PC-3 (cell line): ENCODE measurements at regions of chr19 and their contacts with region 1.

Region 1: DNA sequence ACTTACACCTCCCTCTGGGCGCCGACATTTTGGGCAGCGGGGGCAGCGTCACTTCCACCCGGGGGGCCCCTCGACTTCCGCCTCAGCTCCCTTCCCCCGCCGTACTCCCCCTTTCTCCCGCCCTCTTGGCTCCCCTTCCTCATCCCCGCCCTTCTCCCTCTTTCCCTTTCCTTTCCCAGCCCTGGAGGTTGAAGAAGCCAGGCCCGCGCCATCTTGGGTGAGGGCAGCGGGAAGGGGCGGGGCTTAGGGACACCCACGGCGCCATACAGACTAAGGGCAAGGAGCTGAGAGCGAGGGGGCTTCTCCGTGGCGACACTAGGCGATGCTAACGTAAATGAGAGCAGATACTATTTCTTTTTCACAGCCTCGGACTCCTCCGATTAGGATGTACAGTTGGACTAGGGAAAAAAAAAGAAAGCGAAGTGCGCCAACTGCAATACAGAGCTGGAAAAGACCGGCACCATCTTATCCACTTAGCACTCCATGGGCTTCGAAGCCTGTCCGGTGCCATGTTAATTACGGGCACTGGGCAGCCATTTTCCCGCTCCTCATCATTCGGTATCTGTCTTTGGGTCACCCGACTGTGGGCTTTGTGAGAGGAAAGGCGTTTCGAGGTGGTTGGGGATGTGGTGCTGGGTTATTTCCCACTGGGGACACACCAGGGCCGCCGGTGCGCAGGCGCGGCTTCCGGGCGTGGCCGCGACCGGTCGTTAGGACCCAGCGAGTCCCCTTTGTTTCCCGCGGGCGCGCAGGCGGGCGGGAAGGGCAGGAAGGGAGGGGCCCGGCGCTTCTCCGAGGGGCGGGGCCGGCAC is at the start of gene FIZ1:
- DNase-seq: peak; percentile 99
- ATAC-seq: peak; percentile 81
- H3K4me3 ChIP-seq: peak within 1 kb of the TSS; percentile 77
- H3K27ac ChIP-seq: peak within 1 kb of the TSS; percentile 87
- H3K4me1 ChIP-seq: peaks cover 17% of the 10 kb centered on the region
- H3K27me3 ChIP-seq: no peaks in the 10 kb centered on the region
- CTCF ChIP-seq: no peak
- total RNA-seq, gene FIZ1: 11.6 and 11.7 TPM in 2 replicates

Region 2: GRCh38 chr19:54803410-54803809 is 796.3 kb before region 1 on chr19 and contains the start of gene KIR2DL4:
- CTCF ChIA-PET with region 1: no interaction called
- POLR2A ChIA-PET with region 1: no interaction called
- intact Hi-C with region 1: no loop called
- DNase-seq: no peak
- ATAC-seq: no peak
- H3K4me3 ChIP-seq: no peak within 1 kb of the TSS
- H3K27ac ChIP-seq: no peak within 1 kb of the TSS
- H3K4me1 ChIP-seq: no peaks in the 10 kb centered on the region
- H3K27me3 ChIP-seq: peaks cover 70% of the 10 kb centered on the region
- CTCF ChIP-seq: no peak
- total RNA-seq, gene KIR2DL4: not detected in 2 replicates

Region 3: GRCh38 chr19:55160128-55160985 is 439.3 kb before region 1 on chr19:
- CTCF ChIA-PET with region 1: no interaction called
- POLR2A ChIA-PET with region 1: interaction called, 10 read pairs
- intact Hi-C with region 1: no loop called
- DNase-seq: peak; percentile 99
- ATAC-seq: peak; percentile 81
- H3K4me3 ChIP-seq: no peak overlapping the region
- H3K27ac ChIP-seq: no peak overlapping the region
- H3K4me1 ChIP-seq: peaks cover 21% of the 10 kb centered on the region
- H3K27me3 ChIP-seq: no peaks in the 10 kb centered on the region
- CTCF ChIP-seq: peak; percentile 99

Region 4: GRCh38 chr19:55407800-55408532 is 191.7 kb before region 1 on chr19:
- CTCF ChIA-PET with region 1: no interaction called
- POLR2A ChIA-PET with region 1: no interaction called
- intact Hi-C with region 1: no loop called
- DNase-seq: peak; percentile 99
- ATAC-seq: peak; percentile 93
- H3K4me3 ChIP-seq: peak overlapping the region; percentile 79
- H3K27ac ChIP-seq: peak overlapping the region; percentile 93
- H3K4me1 ChIP-seq: peaks cover 20% of the 10 kb centered on the region
- H3K27me3 ChIP-seq: no peaks in the 10 kb centered on the region
- CTCF ChIP-seq: no peak

Region 5: GRCh38 chr19:55580628-55581144 is 19.0 kb before region 1 on chr19 and contains the start of gene ZNF579:
- CTCF ChIA-PET with region 1: interaction called, 4 read pairs
- POLR2A ChIA-PET with region 1: interaction called, 3 read pairs
- intact Hi-C with region 1: loop called (anchors 2 kb)
- DNase-seq: peak; percentile 92
- ATAC-seq: peak; percentile 78
- H3K4me3 ChIP-seq: peak within 1 kb of the TSS; percentile 93
- H3K27ac ChIP-seq: peak within 1 kb of the TSS; percentile 60
- H3K4me1 ChIP-seq: peaks cover 6% of the 10 kb centered on the region; the same call in 1 of the 2 replicates
- H3K27me3 ChIP-seq: no peaks in the 10 kb centered on the region
- CTCF ChIP-seq: no peak
- total RNA-seq, gene ZNF579: 13.5 and 26.1 TPM in 2 replicates

Region 6: DNA sequence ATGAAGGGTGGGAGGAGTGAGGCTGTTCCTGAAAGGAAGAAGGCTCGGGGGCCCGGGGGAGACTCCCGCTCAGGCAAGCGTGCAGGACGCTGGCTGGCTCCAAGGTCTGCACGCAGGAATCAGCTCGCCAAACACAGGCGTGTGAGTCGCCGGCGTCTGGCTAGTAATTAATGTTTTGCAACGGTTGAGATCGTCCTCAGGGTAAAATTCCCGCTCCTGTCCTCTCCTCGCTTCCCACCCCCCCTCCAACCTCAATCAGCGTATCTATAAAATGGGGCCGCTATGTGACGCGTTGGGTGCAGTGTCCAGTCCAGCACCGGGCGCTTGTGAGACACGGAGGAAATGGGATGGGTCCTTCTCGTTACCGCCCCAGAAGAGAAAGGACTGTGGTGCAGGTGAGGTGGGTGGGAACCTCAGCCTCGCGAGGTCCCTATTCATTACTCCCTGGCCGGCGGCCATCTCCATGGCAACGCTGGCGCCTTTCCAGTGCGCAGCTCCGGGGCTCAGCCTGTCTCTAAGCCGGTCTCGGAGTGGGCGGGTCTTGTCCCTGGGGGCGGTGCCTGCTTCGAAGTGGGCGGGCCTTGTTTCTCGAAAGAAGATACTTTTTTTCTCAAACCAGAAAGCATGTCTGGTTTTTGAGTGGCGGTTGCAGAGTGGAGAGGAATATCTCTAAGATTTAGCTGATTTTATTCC is 12.6 kb before region 1 on chr19:
- CTCF ChIA-PET with region 1: no interaction called
- POLR2A ChIA-PET with region 1: interaction called, 6 read pairs
- intact Hi-C with region 1: loop called (anchors 1 kb)
- DNase-seq: peak; percentile 99
- ATAC-seq: peak; percentile 91
- H3K4me3 ChIP-seq: peak overlapping the region; percentile 66
- H3K27ac ChIP-seq: no peak overlapping the region
- H3K4me1 ChIP-seq: peaks cover 10% of the 10 kb centered on the region
- H3K27me3 ChIP-seq: no peaks in the 10 kb centered on the region
- CTCF ChIP-seq: no peak

Region 7: DNA sequence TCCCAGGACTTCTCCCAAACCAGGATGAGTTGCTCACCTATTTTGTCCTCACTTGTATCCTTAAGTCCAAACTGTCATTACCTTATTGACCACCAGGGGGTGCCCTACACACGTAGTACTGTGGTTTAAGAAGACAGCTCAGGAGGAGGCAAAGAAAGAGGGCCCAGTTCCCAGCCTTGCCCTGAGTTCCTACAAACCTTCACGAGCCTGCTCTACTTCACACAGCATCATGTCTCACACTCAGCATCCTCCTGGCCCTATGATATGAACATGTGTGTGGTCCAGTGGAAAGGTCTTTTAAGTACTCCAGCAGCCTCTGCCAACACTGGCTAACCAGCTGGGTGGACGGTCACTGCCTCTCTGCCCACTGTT is 32.8 kb after region 1 on chr19:
- CTCF ChIA-PET with region 1: interaction called, 12 read pairs
- POLR2A ChIA-PET with region 1: interaction called, 7 read pairs
- intact Hi-C with region 1: loop called (anchors 5 kb)
- DNase-seq: peak; percentile 99
- ATAC-seq: peak; percentile 73
- H3K4me3 ChIP-seq: no peak overlapping the region
- H3K27ac ChIP-seq: no peak overlapping the region
- H3K4me1 ChIP-seq: peaks cover 13% of the 10 kb centered on the region
- H3K27me3 ChIP-seq: no peaks in the 10 kb centered on the region
- CTCF ChIP-seq: peak; percentile 96

Region 8: GRCh38 chr19:55640577-55641425 is 41.1 kb after region 1 on chr19 and contains the start of gene ZNF580:
- CTCF ChIA-PET with region 1: no interaction called
- POLR2A ChIA-PET with region 1: no interaction called
- intact Hi-C with region 1: loop called (anchors 2 kb)
- DNase-seq: peak; percentile 80
- ATAC-seq: peak; percentile 45
- H3K4me3 ChIP-seq: peak within 1 kb of the TSS; percentile 96
- H3K27ac ChIP-seq: peak within 1 kb of the TSS; percentile 62
- H3K4me1 ChIP-seq: peaks cover 42% of the 10 kb centered on the region
- H3K27me3 ChIP-seq: no peaks in the 10 kb centered on the region
- CTCF ChIP-seq: no peak
- total RNA-seq, gene ZNF580: 15.2 and 23.9 TPM in 2 replicates